ENCODE measurements at regions of chr2 and their contacts with region 1.

Region 1: DNA sequence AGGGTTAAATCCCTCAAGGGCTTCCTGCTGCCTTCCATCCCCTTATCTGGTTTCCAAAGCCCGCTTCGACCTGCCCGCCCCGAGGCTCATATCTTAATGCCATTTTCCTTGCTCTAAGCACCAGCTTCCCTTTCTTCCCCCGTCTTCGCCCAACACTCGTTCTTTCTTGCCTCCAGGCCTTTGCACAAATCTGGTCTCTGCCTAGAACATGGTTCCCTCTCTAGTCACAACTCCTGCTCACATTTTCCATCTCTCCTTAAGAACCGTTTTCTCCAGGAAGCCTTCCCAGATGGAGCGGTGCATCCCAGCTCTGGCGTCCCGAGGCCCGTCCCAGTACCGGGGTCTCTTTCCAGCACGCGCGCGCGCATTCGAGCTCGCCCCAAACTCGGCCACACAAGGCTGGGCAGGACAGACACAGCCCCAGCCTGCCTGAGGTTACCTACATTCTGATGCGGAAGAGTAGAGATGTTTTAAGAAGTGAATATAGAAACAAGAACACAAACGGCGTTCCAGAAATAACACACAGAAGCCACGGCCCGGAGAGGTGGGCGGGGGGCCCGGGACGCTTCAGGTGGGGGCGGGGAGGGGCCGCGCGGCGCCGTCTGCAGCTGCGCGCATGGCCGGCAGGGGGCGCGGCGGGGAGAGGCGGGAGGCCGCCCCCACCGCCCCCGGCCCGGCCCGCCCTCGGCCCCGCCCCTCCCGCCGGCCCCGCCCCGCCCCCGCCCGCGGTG is at the start of gene DGKD:
- DNase-seq: peak in 3 of 10 donors; percentile 41 to 66 (median 64)
- H3K4me3 ChIP-seq: peak within 1 kb of the TSS; percentile 41 to 83 (median 67)
- H3K27ac ChIP-seq: peak within 1 kb of the TSS in 45 of 59 donors; percentile 5 to 91 (median 63)
- H3K27me3 ChIP-seq: no peaks in the 10 kb centered on the region
- CTCF ChIP-seq: peak in 22 of 56 donors; percentile 3 to 46 (median 28)
- total RNA-seq, gene DGKD: 26.8 to 76.7 (median 50.5) TPM

Region 2: GRCh38 chr2:233288719-233289118 is 65.2 kb before region 1 on chr2:
- intact Hi-C with region 1: loop called in 1 of 2 experiments (anchors 10 kb)
- DNase-seq: peak in 4 of 10 donors; percentile 17 to 57 (median 52)
- H3K4me3 ChIP-seq: peak overlapping the region in 7 of 59 donors; percentile 0 to 40 (median 7)
- H3K27ac ChIP-seq: peak overlapping the region in 55 of 59 donors; percentile 2 to 90 (median 70)
- H3K27me3 ChIP-seq: no peaks in the 10 kb centered on the region
- CTCF ChIP-seq: peak in 1 of 56 donors; percentile 6

Region 3: GRCh38 chr2:233387667-233388528 is 34.0 kb after region 1 on chr2:
- intact Hi-C with region 1: loop called (anchors 2 to 5 kb)
- DNase-seq: peak; percentile 72 to 94 (median 86)
- H3K4me3 ChIP-seq: peak overlapping the region in 43 of 59 donors; percentile 2 to 53 (median 26)
- H3K27ac ChIP-seq: peak overlapping the region; percentile 18 to 93 (median 83)
- H3K27me3 ChIP-seq: no peaks in the 10 kb centered on the region
- CTCF ChIP-seq: peak in 12 of 56 donors; percentile 4 to 36 (median 12)

Region 4: GRCh38 chr2:233443468-233444183 is 89.7 kb after region 1 on chr2:
- intact Hi-C with region 1: loop called (anchors 2 to 5 kb)
- DNase-seq: peak; percentile 60 to 88 (median 78)
- H3K4me3 ChIP-seq: no peak overlapping the region
- H3K27ac ChIP-seq: peak overlapping the region in 3 of 59 donors; percentile 18 to 66 (median 35)
- H3K27me3 ChIP-seq: no peaks in the 10 kb centered on the region
- CTCF ChIP-seq: peak; percentile 63 to 90 (median 81)

Measured in dorsolateral prefrontal cortex (tissue), 120 donors.